ENCODE measurements at regions of chr2 and their contacts with region 1.

Region 1: DNA sequence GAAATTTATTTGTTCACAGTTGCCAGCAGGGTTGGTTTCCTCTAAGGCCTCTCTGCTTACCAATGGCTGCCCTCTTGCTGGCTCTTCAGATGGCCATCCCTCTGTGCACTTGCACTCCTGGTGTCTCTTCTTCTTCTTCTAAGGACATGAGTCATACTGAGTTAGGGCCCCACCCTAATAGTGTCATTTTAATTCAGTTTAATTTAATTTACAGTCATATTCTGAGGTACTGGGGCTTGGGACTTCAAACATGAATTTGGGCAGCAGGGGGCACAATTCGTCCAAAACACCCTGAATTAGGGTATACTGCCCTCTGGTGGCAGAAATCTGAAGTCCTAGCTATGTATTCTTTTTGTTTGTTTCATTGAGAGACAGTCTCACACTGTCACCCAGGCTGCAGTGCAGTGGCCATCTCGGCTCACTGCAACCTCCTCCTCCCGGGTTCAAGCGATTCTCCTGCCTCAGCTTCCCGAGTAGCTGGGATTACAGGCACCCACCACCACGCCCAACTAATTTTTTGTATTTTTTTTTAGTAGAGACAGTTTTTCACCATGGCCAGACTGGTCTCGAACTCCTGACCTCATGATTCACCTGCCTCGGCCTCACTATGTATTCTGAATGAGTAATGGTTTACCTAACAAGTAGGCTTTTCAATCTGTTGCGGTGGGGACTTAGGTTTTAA is 19.8 kb downstream of the SLC4A1AP start:
- DNase-seq: peak; percentile 56
- ATAC-seq: peak; percentile 99
- H3K4me3 ChIP-seq: no peak overlapping the region
- H3K27ac ChIP-seq: no peak overlapping the region
- H3K4me1 ChIP-seq: no peaks in the 10 kb centered on the region
- H3K27me3 ChIP-seq: no peaks in the 10 kb centered on the region
- CTCF ChIP-seq: peak; percentile 94 to 99 (median 99)
- EP300 ChIP-seq: no peak
- POLR2A ChIP-seq: no peak
- RAD21 ChIP-seq: peak; percentile 71

Region 2: DNA sequence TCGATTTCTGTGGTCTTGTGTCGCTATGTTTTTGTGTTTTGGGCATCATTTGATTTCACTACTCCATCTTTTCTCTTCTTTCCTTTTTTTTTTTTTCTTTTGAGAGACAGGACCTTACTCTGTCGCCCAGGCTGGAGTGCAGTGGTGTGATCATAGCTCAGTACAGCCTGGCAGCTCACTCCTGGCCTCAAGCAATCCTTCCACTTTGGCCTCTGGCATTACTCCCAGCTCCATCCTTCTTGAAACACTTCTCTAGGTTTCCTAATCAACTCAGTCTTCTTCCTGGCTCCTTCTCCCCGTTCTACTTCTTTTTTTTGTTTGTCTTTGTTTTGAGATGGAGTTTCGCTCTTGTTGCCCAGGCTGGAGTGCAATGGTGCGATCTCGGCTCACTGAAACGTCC is 508.2 kb before region 1 on chr2:
- CTCF ChIA-PET with region 1: no interaction called
- POLR2A ChIA-PET with region 1: no interaction called
- RAD21 ChIA-PET with region 1: no interaction called
- SMC1A ChIA-PET with region 1: no interaction called
- in situ Hi-C with region 1: no loop called
- intact Hi-C with region 1: no loop called
- DNase-seq: no peak
- ATAC-seq: no peak
- H3K4me3 ChIP-seq: no peak overlapping the region
- H3K27ac ChIP-seq: no peak overlapping the region
- H3K4me1 ChIP-seq: peaks cover 8% of the 10 kb centered on the region
- H3K27me3 ChIP-seq: no peaks in the 10 kb centered on the region; a peak in 1 of 4 replicates
- CTCF ChIP-seq: no peak
- EP300 ChIP-seq: no peak
- POLR2A ChIP-seq: no peak
- RAD21 ChIP-seq: no peak

Region 3: DNA sequence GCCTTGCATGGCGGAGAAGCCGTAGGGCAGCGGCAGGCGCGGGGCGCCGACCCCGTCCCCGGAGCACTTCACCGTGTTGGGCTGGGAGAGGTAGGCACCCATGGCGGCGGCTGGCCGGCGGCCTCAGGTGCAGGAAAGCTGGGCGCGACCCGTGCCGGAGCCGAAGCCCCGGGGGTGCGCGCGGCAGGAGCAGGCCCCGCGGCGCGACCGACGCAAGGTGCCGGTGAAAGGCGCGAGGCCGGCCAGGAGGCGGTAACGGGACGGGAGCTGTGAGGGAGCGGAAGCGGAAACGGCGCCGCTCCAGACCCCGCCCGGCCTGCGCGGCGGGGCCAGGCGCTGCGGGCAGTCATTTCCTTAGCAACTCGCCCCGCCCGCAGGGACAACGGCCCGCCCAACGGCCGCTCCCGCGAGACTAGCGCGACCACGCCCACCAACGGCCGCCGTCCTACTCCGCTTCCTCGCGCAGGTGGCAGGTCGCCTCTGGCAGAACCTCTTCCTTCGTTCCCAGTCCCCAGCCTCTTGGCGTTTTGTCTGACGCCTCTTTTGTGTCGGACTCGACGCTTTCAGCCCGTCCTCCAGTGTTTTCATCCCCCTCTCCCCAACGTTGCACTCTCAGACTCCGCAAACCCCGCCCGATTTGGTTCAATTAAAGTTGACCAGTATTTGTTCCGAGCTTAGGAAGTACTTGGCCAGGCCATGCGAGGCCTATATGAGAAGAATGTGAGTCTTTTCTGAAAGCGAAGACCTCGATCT is 274.0 kb before region 1 on chr2 and contains the start of gene PPM1G:
- CTCF ChIA-PET with region 1: interaction called, 5 read pairs
- POLR2A ChIA-PET with region 1: no interaction called
- RAD21 ChIA-PET with region 1: interaction called, 3 read pairs
- SMC1A ChIA-PET with region 1: interaction called, 3 read pairs
- in situ Hi-C with region 1: no loop called
- intact Hi-C with region 1: loop called (anchors 10 kb)
- DNase-seq: peak; percentile 85
- ATAC-seq: peak; percentile 97
- H3K4me3 ChIP-seq: peak within 1 kb of the TSS; percentile 99
- H3K27ac ChIP-seq: peak within 1 kb of the TSS; percentile 76
- H3K4me1 ChIP-seq: peaks cover 6% of the 10 kb centered on the region; the same call in 1 of the 2 replicates
- H3K27me3 ChIP-seq: no peaks in the 10 kb centered on the region
- CTCF ChIP-seq: no peak
- EP300 ChIP-seq: no peak
- POLR2A ChIP-seq: peak; percentile 95
- RAD21 ChIP-seq: no peak
- polyA plus RNA-seq, gene PPM1G: 78.5 to 81.1 TPM

Region 4: DNA sequence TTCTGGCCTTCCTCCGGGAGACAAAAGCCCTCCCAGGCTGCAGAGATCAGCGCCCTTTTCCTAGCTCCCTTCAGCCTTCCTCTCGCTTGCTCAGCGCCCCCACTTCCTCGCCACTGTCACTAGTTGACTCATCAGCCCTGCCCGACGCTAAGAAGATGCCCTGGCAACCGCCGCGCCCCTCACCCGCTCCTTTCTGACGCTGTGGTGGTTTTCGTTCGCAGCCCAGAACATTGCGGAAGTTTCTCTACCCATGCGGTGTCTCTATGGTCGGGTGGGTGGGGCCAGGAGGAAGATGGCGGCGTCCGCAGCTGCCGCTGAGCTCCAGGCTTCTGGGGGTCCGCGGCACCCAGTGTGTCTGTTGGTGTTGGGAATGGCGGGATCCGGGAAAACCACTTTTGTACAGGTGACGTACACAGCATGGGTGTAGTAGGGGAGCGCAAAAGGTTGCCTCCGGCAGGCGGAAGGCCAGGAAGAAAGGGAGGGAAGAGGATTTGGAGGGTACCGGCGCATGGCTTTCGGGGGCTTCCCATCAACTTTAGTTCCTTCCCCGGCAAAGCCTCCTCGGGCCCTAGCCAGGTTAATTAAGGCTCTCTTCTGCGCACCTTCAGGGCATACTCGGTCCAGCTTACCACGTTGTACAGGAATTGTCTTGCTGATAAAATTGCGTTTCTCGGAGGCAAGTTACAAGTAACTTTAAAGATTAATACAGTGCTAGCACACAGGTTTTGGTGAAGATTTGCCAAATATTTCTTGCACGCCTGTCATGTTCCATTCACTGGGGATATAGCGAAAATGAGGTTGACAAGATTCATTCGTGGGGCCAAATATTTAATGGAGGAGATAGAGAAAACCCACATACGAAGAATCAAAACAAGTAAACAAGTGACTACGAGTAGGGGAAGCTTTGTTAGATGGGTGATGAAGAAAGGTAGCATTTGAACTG is 54.5 kb before region 1 on chr2 and contains the starts of genes CCDC121 and GPN1:
- CTCF ChIA-PET with region 1: interaction called, 34 read pairs
- POLR2A ChIA-PET with region 1: no interaction called
- RAD21 ChIA-PET with region 1: interaction called, 3 read pairs
- SMC1A ChIA-PET with region 1: no interaction called
- in situ Hi-C with region 1: no loop called
- intact Hi-C with region 1: no loop called
- DNase-seq: peak; percentile 75
- ATAC-seq: peak; percentile 99
- H3K4me3 ChIP-seq: peak within 1 kb of the TSS; percentile 95
- H3K27ac ChIP-seq: peak within 1 kb of the TSS; percentile 90
- H3K4me1 ChIP-seq: peaks cover 7% of the 10 kb centered on the region
- H3K27me3 ChIP-seq: no peaks in the 10 kb centered on the region
- CTCF ChIP-seq: no peak
- EP300 ChIP-seq: peak in 1 of 2 experiments; percentile 70; a peak in 1 of 4 replicates
- POLR2A ChIP-seq: peak; percentile 99
- RAD21 ChIP-seq: no peak
- polyA plus RNA-seq, gene CCDC121: 0.37 to 0.38 TPM
- polyA plus RNA-seq, gene GPN1: 89.5 to 108 TPM

Region 5: GRCh38 chr2:27647289-27647688 is 36.2 kb before region 1 on chr2:
- CTCF ChIA-PET with region 1: interaction called, 16 read pairs
- POLR2A ChIA-PET with region 1: no interaction called
- RAD21 ChIA-PET with region 1: no interaction called
- SMC1A ChIA-PET with region 1: interaction called, 4 read pairs
- in situ Hi-C with region 1: no loop called
- intact Hi-C with region 1: no loop called
- DNase-seq: no peak
- ATAC-seq: no peak
- H3K4me3 ChIP-seq: no peak overlapping the region
- H3K27ac ChIP-seq: no peak overlapping the region
- H3K4me1 ChIP-seq: no peaks in the 10 kb centered on the region
- H3K27me3 ChIP-seq: no peaks in the 10 kb centered on the region
- CTCF ChIP-seq: no peak
- EP300 ChIP-seq: no peak
- POLR2A ChIP-seq: no peak
- RAD21 ChIP-seq: no peak

Region 6: GRCh38 chr2:27663463-27664249 is 19.9 kb before region 1 on chr2 and contains the starts of genes SLC4A1AP and SUPT7L:
- CTCF ChIA-PET with region 1: interaction called, 79 read pairs
- POLR2A ChIA-PET with region 1: interaction called, 3 read pairs
- RAD21 ChIA-PET with region 1: no interaction called
- SMC1A ChIA-PET with region 1: interaction called, 4 read pairs
- in situ Hi-C with region 1: no loop called
- intact Hi-C with region 1: no loop called
- DNase-seq: peak; percentile 77
- ATAC-seq: peak; percentile 90
- H3K4me3 ChIP-seq: peak within 1 kb of the TSS; percentile 90
- H3K27ac ChIP-seq: peak within 1 kb of the TSS; percentile 80
- H3K4me1 ChIP-seq: peaks cover 10% of the 10 kb centered on the region
- H3K27me3 ChIP-seq: no peaks in the 10 kb centered on the region
- CTCF ChIP-seq: no peak
- EP300 ChIP-seq: peak in 1 of 2 experiments; percentile 40; a peak in 1 of 4 replicates
- POLR2A ChIP-seq: peak; percentile 90
- RAD21 ChIP-seq: no peak
- polyA plus RNA-seq, gene SLC4A1AP: 6.5 to 16.4 TPM
- polyA plus RNA-seq, gene SUPT7L: 10.2 to 13.3 TPM

Region 7: GRCh38 chr2:27703638-27704341 is 20.3 kb after region 1 on chr2:
- CTCF ChIA-PET with region 1: interaction called, 23 read pairs
- POLR2A ChIA-PET with region 1: no interaction called
- RAD21 ChIA-PET with region 1: interaction called, 4 read pairs
- SMC1A ChIA-PET with region 1: interaction called, 7 read pairs
- in situ Hi-C with region 1: no loop called
- intact Hi-C with region 1: no loop called
- DNase-seq: peak; percentile 40
- ATAC-seq: peak; percentile 97
- H3K4me3 ChIP-seq: no peak overlapping the region
- H3K27ac ChIP-seq: no peak overlapping the region
- H3K4me1 ChIP-seq: no peaks in the 10 kb centered on the region
- H3K27me3 ChIP-seq: no peaks in the 10 kb centered on the region
- CTCF ChIP-seq: peak; percentile 83 to 93 (median 87)
- EP300 ChIP-seq: no peak
- POLR2A ChIP-seq: no peak
- RAD21 ChIP-seq: peak; percentile 94

Region 8: DNA sequence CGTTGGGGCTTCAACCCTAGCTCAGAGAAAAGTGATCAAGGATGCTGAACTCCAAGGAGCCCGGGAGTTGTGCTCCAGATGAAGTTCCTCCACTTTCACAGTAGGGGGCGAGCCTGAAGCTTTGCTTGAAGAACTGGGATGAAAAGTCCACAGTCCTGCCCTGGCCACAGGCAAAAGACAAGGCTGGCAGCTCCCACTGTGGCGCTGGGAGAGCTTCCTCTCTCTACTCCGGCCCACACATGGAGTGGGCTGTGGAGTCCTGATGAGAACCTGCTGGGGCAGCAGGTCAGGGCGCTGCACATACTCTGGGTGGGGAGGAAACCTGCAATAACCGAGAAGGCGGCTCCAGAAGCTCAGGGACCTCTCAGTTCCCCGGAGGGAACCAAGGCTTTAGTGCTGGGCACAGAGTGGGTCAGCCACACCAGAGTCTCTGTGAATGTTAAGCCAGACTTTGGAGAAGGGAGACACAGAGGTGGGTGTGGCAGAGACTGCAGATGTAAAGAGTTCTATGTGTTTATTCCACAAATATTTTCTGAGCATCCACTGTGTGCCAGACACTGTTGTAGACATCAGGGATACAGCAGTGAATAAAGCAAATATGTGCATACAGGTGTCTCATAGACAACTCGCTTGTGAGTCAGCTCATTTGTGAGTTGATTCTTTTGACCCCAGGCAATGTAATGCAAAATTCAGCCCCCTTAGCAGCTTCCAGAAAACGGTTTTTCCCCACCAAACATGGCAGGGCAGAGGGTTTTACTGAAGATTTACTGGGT is 40.0 kb after region 1 on chr2:
- CTCF ChIA-PET with region 1: interaction called, 14 read pairs
- POLR2A ChIA-PET with region 1: no interaction called
- RAD21 ChIA-PET with region 1: no interaction called
- SMC1A ChIA-PET with region 1: interaction called, 7 read pairs
- in situ Hi-C with region 1: no loop called
- intact Hi-C with region 1: no loop called
- DNase-seq: no peak
- ATAC-seq: peak; percentile 81
- H3K4me3 ChIP-seq: no peak overlapping the region
- H3K27ac ChIP-seq: no peak overlapping the region
- H3K4me1 ChIP-seq: no peaks in the 10 kb centered on the region
- H3K27me3 ChIP-seq: no peaks in the 10 kb centered on the region; a peak in 1 of 4 replicates
- CTCF ChIP-seq: peak; percentile 56 to 77 (median 70)
- EP300 ChIP-seq: no peak
- POLR2A ChIP-seq: no peak
- RAD21 ChIP-seq: peak; percentile 56

Measured in GM12878 (cell line).